Naive thymus-derived CD8-positive, alpha-beta T cell (primary cell): ENCODE measurements at regions of chr9 and their contacts with region 1.

Region 1: GRCh38 chr9:37575921-37576721 is at the start of gene FBXO10:
- DNase-seq: peak in 8 of 10 donors; percentile 8 to 42 (median 33)
- ATAC-seq: peak; percentile 83
- H3K4me3 Mint-ChIP-seq: peak within 1 kb of the TSS; percentile 85 to 94 (median 90)
- H3K27ac Mint-ChIP-seq: peak within 1 kb of the TSS in 8 of 10 donors; percentile 36 to 90 (median 75)
- H3K4me1 Mint-ChIP-seq: peaks cover 9 to 31% (median 21%) of the 10 kb centered on the region in 4 donors
- H3K27me3 Mint-ChIP-seq: peaks cover 0 to 2% (median 0%) of the 10 kb centered on the region in 5 donors
- polyA plus RNA-seq, gene FBXO10: 0.20 to 0.77 (median 0.40) TPM

Region 2: DNA sequence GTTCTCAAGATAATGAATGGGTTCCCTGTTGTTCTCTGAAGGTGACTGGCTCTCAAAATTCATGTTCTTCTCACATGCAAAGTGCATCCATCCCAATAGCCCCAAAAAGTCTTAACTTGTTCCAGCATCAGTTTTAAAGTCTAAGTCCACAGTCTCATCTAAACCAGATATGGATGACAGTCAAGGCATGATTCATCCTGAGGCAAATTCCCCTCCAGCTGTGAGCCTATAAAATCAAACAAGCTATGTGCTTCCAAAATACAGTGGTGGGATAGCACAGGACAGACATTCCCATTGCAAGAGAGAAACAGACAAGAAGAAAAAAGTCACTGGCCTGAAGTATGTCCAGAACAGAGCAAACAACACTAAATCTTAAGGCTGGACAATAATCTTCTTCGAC is 25.3 kb before region 1 on chr9:
- POLR2A ChIA-PET with region 1: no interaction called
- DNase-seq: no peak
- ATAC-seq: no peak
- H3K4me3 Mint-ChIP-seq: no peak overlapping the region
- H3K27ac Mint-ChIP-seq: no peak overlapping the region
- H3K4me1 Mint-ChIP-seq: no peaks in the 10 kb centered on the region
- H3K27me3 Mint-ChIP-seq: no peaks in the 10 kb centered on the region

Region 3: GRCh38 chr9:37592108-37592951 is 16.2 kb after region 1 on chr9 and contains the start of gene TOMM5:
- POLR2A ChIA-PET with region 1: interaction called, 10 read pairs
- DNase-seq: peak; percentile 79 to 94 (median 88)
- ATAC-seq: peak; percentile 95 to 96
- H3K4me3 Mint-ChIP-seq: peak within 1 kb of the TSS; percentile 95 to 100 (median 99)
- H3K27ac Mint-ChIP-seq: peak within 1 kb of the TSS; percentile 94 to 99 (median 98)
- H3K4me1 Mint-ChIP-seq: peaks cover 9 to 50% (median 34%) of the 10 kb centered on the region in 4 donors
- H3K27me3 Mint-ChIP-seq: peaks cover 0 to 13% (median 5%) of the 10 kb centered on the region in 5 donors
- polyA plus RNA-seq, gene TOMM5: 145 to 176 (median 169) TPM